H1 (cell line): ENCODE measurements at regions of chr6 and their contacts with region 1.

Region 1: GRCh38 chr6:49625140-49625539 is 11.5 kb downstream of the RHAG start:
- DNase-seq: no peak
- H3K4me3 ChIP-seq: no peak overlapping the region
- H3K27ac ChIP-seq: no peak overlapping the region
- H3K4me1 ChIP-seq: no peaks in the 10 kb centered on the region
- H3K27me3 ChIP-seq: no peaks in the 10 kb centered on the region
- CTCF ChIP-seq: no peak
- EP300 ChIP-seq: no peak
- POLR2A ChIP-seq: no peak
- RAD21 ChIP-seq: no peak

Region 2: GRCh38 chr6:49653942-49654341 is 28.8 kb after region 1 on chr6:
- CTCF ChIA-PET with region 1: no interaction called
- POLR2A ChIA-PET with region 1: no interaction called
- DNase-seq: no peak
- H3K4me3 ChIP-seq: no peak overlapping the region
- H3K27ac ChIP-seq: no peak overlapping the region
- H3K4me1 ChIP-seq: no peaks in the 10 kb centered on the region
- H3K27me3 ChIP-seq: no peaks in the 10 kb centered on the region
- CTCF ChIP-seq: no peak
- EP300 ChIP-seq: no peak
- POLR2A ChIP-seq: no peak
- RAD21 ChIP-seq: no peak

Region 3: GRCh38 chr6:49849213-49849907 is 224.2 kb after region 1 on chr6:
- CTCF ChIA-PET with region 1: interaction called, 14 read pairs
- POLR2A ChIA-PET with region 1: no interaction called
- DNase-seq: no peak
- H3K4me3 ChIP-seq: no peak overlapping the region
- H3K27ac ChIP-seq: no peak overlapping the region
- H3K4me1 ChIP-seq: no peaks in the 10 kb centered on the region
- H3K27me3 ChIP-seq: no peaks in the 10 kb centered on the region
- CTCF ChIP-seq: peak in 2 of 3 experiments; percentile 28 to 32; a peak in 2 of 4 replicates
- EP300 ChIP-seq: no peak
- POLR2A ChIP-seq: no peak
- RAD21 ChIP-seq: peak; percentile 73 to 78